ENCODE measurements at regions of chr12 and their contacts with region 1.

Region 1: GRCh38 chr12:4240161-4240783 is 33.3 kb upstream of the CCND2 start:
- DNase-seq: peak; percentile 15
- H3K4me3 ChIP-seq: no peak overlapping the region
- H3K27ac ChIP-seq: no peak overlapping the region
- H3K4me1 ChIP-seq: no peaks in the 10 kb centered on the region
- H3K27me3 ChIP-seq: no peaks in the 10 kb centered on the region
- CTCF ChIP-seq: no peak
- EP300 ChIP-seq: no peak
- POLR2A ChIP-seq: no peak

Region 2: GRCh38 chr12:4135919-4136605 is 104.2 kb before region 1 on chr12:
- in situ Hi-C with region 1: no loop called
- intact Hi-C with region 1: no loop called
- DNase-seq: no peak
- H3K4me3 ChIP-seq: no peak overlapping the region
- H3K27ac ChIP-seq: no peak overlapping the region
- H3K4me1 ChIP-seq: no peaks in the 10 kb centered on the region
- H3K27me3 ChIP-seq: no peaks in the 10 kb centered on the region
- CTCF ChIP-seq: no peak
- EP300 ChIP-seq: no peak
- POLR2A ChIP-seq: no peak

Region 3: DNA sequence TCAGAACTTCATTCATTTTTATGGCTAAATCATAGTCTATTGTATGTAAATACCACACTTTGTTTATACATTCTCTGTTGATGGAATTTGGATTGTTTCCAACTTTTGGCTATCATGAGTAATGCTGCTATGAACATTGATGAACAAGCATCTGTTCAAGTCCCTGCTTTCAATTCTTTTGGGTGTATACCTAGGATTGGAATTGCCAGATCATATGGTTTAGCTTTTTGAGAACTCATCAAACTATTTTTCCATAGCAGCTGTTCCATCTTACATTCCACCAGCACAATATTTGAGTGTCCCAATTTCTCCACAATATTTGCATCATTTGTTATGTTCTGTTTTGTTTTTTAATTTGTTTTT is 19.0 kb before region 1 on chr12:
- in situ Hi-C with region 1: no loop called
- intact Hi-C with region 1: loop called (anchors 1 kb)
- DNase-seq: no peak
- H3K4me3 ChIP-seq: no peak overlapping the region
- H3K27ac ChIP-seq: no peak overlapping the region
- H3K4me1 ChIP-seq: no peaks in the 10 kb centered on the region
- H3K27me3 ChIP-seq: peaks cover 5% of the 10 kb centered on the region
- CTCF ChIP-seq: no peak
- EP300 ChIP-seq: no peak
- POLR2A ChIP-seq: no peak